ENCODE measurements at regions of chr6 and their contacts with region 1.

Region 1: DNA sequence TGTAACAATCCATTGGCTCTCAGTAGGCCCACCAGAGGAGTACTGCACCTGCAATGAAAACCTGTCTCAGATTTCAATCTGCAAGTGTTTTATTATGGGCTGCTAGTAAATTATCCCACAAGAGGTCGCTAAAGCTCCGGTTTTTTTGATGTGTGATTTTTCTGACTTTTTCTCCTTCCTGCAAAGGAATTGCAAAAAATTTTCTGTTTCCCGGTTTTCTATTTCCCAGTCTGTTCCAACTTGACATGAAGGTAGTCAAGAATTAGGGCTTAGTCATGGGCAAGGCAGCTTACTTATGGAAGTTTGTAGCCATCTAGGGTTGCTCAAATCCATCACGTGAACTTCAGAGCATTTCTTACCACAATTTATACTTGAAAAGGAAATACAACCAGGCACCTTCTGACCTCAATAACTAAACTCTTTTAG is 38.5 kb upstream of the AHI1 start:
- DNase-seq: peak; percentile 79
- H3K4me3 Mint-ChIP-seq: no peak overlapping the region
- H3K27ac Mint-ChIP-seq: no peak overlapping the region
- H3K4me1 Mint-ChIP-seq: peaks cover 9% of the 10 kb centered on the region
- H3K27me3 Mint-ChIP-seq: no peaks in the 10 kb centered on the region
- CTCF ChIP-seq: peak; percentile 49

Region 2: DNA sequence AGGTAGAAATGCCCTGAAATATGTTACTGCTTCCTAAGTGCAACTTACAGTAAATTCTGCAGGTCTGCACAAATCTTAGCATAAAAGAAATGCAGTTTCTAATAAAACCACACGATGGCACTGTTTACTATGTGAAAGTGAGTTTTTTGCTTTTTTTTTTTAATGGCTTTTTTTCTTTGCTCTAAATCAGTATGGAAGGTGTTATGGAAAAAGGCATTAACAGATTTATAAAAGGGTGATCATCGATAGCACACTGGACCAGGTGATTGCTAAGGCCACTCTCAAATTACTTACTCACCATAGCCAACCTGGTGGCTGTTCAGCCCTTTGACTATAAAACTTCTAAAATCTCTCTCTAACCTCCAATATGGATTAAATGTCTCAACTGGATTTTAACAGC is 84.3 kb before region 1 on chr6:
- CTCF ChIA-PET with region 1: interaction called, 11 read pairs
- POLR2A ChIA-PET with region 1: no interaction called
- intact Hi-C with region 1: loop called (anchors 1 kb)
- DNase-seq: peak; percentile 57
- H3K4me3 Mint-ChIP-seq: no peak overlapping the region
- H3K27ac Mint-ChIP-seq: no peak overlapping the region
- H3K4me1 Mint-ChIP-seq: no peaks in the 10 kb centered on the region
- H3K27me3 Mint-ChIP-seq: no peaks in the 10 kb centered on the region
- CTCF ChIP-seq: peak; percentile 61

Region 3: GRCh38 chr6:135506270-135506997 is 29.6 kb before region 1 on chr6:
- CTCF ChIA-PET with region 1: interaction called, 5 read pairs
- POLR2A ChIA-PET with region 1: no interaction called
- intact Hi-C with region 1: loop called (anchors 2 kb)
- DNase-seq: peak; percentile 66
- H3K4me3 Mint-ChIP-seq: no peak overlapping the region
- H3K27ac Mint-ChIP-seq: no peak overlapping the region
- H3K4me1 Mint-ChIP-seq: no peaks in the 10 kb centered on the region
- H3K27me3 Mint-ChIP-seq: no peaks in the 10 kb centered on the region
- CTCF ChIP-seq: peak; percentile 43

Region 4: GRCh38 chr6:135851442-135852271 is 315.7 kb after region 1 on chr6 and contains the start of gene PDE7B:
- CTCF ChIA-PET with region 1: interaction called, 8 read pairs
- POLR2A ChIA-PET with region 1: interaction called, 4 read pairs
- intact Hi-C with region 1: loop called (anchors 5 kb)
- DNase-seq: peak; percentile 95
- H3K4me3 Mint-ChIP-seq: peak within 1 kb of the TSS; percentile 75
- H3K27ac Mint-ChIP-seq: peak within 1 kb of the TSS; percentile 90
- H3K4me1 Mint-ChIP-seq: peaks cover 15% of the 10 kb centered on the region
- H3K27me3 Mint-ChIP-seq: no peaks in the 10 kb centered on the region
- CTCF ChIP-seq: no peak
- total RNA-seq, gene PDE7B: 0.42 and 1.4 TPM in 2 replicates

Region 5: GRCh38 chr6:135909737-135910387 is 373.9 kb after region 1 on chr6:
- CTCF ChIA-PET with region 1: interaction called, 4 read pairs
- POLR2A ChIA-PET with region 1: no interaction called
- intact Hi-C with region 1: loop called (anchors 1 kb)
- DNase-seq: peak; percentile 83
- H3K4me3 Mint-ChIP-seq: no peak overlapping the region
- H3K27ac Mint-ChIP-seq: no peak overlapping the region
- H3K4me1 Mint-ChIP-seq: peaks cover 24% of the 10 kb centered on the region
- H3K27me3 Mint-ChIP-seq: no peaks in the 10 kb centered on the region
- CTCF ChIP-seq: peak; percentile 57

Region 6: DNA sequence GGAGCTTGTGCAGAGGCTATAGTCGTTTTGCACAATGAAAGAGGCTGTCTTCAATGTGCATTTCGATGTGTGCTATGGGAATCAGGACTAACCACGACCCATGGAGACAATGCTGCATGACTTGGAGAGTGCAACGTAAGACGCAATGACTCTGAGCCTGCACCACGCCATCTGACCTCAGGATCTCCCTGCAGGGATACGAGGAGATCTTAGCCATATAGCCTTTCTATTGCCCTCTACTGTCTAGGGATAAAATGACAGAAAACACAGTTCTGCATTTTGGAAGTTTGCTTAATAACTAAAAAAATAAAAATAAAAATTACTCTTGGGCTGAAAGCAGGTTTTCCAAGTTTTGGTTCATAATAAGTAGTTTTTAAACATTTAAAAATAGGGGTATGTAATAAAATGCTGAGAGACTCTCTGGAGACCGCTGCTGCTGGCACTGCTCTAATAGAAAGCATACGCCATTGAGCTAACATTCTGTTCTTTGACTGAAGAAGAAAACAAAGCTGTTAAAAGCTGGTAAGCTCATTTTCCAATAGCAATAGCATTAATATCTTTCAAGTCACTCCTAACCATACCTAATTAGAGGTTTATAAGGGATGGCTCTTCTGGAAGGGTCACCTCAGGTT is 402.7 kb after region 1 on chr6:
- CTCF ChIA-PET with region 1: interaction called, 3 read pairs
- POLR2A ChIA-PET with region 1: no interaction called
- intact Hi-C with region 1: loop called (anchors 1 kb)
- DNase-seq: peak; percentile 38
- H3K4me3 Mint-ChIP-seq: no peak overlapping the region
- H3K27ac Mint-ChIP-seq: no peak overlapping the region
- H3K4me1 Mint-ChIP-seq: peaks cover 25% of the 10 kb centered on the region
- H3K27me3 Mint-ChIP-seq: no peaks in the 10 kb centered on the region
- CTCF ChIP-seq: peak; percentile 30

Region 7: GRCh38 chr6:136201732-136202131 is 665.7 kb after region 1 on chr6:
- CTCF ChIA-PET with region 1: interaction called, 3 read pairs
- POLR2A ChIA-PET with region 1: no interaction called
- intact Hi-C with region 1: loop called (anchors 1 kb)
- DNase-seq: peak; percentile 7
- H3K4me3 Mint-ChIP-seq: no peak overlapping the region
- H3K27ac Mint-ChIP-seq: no peak overlapping the region
- H3K4me1 Mint-ChIP-seq: no peaks in the 10 kb centered on the region
- H3K27me3 Mint-ChIP-seq: no peaks in the 10 kb centered on the region
- CTCF ChIP-seq: peak; percentile 13

Measured in MCF 10A (cell line).